ENCODE measurements at regions of chr12 and their contacts with region 1.

Region 1: GRCh38 chr12:5003020-5003666 is 40.5 kb upstream of the KCNA5 start:
- DNase-seq: peak in 3 of 4 donors; percentile 12 to 48 (median 45)
- ATAC-seq: peak; percentile 95
- H3K4me3 ChIP-seq: no peak overlapping the region
- H3K27ac ChIP-seq: no peak overlapping the region
- H3K4me1 ChIP-seq: no peaks in the 10 kb centered on the region
- H3K27me3 ChIP-seq: peaks cover 0 to 30% of the 10 kb centered on the region in 2 donors
- CTCF ChIP-seq: peak; percentile 73 to 86

Region 2: DNA sequence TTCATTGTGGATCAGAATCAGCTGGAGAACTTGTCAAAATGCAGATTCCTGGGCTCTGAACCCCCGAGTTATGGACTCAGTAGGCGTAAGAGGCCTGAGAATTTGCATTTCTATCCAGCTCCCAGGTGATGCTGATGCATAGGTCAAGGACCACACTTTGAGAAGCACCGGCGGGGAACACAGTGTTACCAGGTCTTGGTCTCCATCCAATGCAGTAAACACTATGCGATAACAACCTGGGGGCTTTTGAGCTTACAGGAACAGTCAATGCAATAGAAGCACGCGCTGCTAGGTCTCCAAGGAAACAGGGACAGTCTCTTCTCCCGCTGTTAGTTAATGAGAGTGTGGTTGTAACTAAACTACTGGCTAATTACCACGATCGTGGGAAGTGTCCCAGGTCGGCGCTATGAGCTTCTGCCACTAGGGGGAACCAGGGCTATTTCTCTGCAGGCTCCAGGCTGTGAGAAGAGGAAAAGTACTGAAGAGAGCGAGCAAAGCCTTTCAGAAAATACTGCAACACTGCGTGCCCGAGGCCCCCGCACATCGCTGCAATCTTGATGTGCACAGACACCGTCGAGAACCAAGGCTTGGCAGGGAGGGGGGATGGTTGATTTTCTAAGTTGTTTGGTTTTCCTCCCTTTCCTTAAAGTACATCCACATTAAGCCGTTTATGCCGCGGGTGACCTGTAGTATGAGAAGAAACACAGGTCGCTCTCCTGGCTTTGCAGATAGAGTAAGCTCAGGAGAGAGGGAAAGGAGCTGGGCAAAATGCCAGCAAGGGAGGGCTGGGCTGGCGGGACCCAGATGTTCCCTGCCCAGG is 145.5 kb before region 1 on chr12:
- intact Hi-C with region 1: loop called in 1 of 2 experiments (anchors 5 kb)
- DNase-seq: peak in 3 of 4 donors; percentile 47 to 67 (median 55)
- ATAC-seq: peak; percentile 94
- H3K4me3 ChIP-seq: no peak overlapping the region
- H3K27ac ChIP-seq: no peak overlapping the region
- H3K4me1 ChIP-seq: peaks cover 6 to 8% of the 10 kb centered on the region in 2 donors
- H3K27me3 ChIP-seq: peaks cover 0 to 65% of the 10 kb centered on the region in 2 donors
- CTCF ChIP-seq: peak; percentile 86 to 96

Region 3: GRCh38 chr12:4899364-4899763 is 103.8 kb before region 1 on chr12:
- intact Hi-C with region 1: no loop called
- DNase-seq: no peak
- ATAC-seq: no peak
- H3K4me3 ChIP-seq: no peak overlapping the region
- H3K27ac ChIP-seq: no peak overlapping the region
- H3K4me1 ChIP-seq: no peaks in the 10 kb centered on the region
- H3K27me3 ChIP-seq: peaks cover 0 to 42% of the 10 kb centered on the region in 2 donors
- CTCF ChIP-seq: no peak

Region 4: DNA sequence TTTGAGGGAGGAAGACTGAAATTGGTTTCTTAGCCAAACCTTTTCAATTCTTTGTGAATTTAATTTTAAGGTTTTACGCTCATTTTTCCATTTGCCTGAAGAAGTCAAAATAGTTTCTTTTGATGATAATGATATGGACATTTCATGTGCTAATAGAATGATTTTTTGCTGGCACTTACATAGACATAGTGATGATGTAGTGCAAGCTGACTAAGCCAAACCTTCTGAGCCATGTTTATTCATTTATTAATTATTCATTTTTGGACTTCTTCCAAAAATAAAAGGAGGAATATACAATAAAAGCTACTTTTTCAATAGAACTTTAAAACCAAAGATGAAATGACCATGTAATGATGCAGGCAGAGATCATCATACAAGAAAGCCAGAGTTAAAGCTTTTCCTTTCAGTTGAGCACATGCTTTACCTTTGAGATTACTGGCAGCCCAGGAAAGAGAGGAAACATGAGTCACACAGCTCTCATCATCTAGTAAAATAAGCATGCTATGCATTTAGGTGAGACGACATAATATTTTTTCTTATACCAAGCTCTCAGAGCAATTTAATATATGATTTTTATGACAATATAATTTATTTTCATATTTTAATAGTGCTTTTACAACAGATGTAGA is 68.6 kb before region 1 on chr12:
- intact Hi-C with region 1: no loop called
- DNase-seq: no peak
- ATAC-seq: no peak
- H3K4me3 ChIP-seq: no peak overlapping the region
- H3K27ac ChIP-seq: no peak overlapping the region
- H3K4me1 ChIP-seq: no peaks in the 10 kb centered on the region
- H3K27me3 ChIP-seq: peaks cover 0 to 55% of the 10 kb centered on the region in 2 donors
- CTCF ChIP-seq: no peak

Region 5: DNA sequence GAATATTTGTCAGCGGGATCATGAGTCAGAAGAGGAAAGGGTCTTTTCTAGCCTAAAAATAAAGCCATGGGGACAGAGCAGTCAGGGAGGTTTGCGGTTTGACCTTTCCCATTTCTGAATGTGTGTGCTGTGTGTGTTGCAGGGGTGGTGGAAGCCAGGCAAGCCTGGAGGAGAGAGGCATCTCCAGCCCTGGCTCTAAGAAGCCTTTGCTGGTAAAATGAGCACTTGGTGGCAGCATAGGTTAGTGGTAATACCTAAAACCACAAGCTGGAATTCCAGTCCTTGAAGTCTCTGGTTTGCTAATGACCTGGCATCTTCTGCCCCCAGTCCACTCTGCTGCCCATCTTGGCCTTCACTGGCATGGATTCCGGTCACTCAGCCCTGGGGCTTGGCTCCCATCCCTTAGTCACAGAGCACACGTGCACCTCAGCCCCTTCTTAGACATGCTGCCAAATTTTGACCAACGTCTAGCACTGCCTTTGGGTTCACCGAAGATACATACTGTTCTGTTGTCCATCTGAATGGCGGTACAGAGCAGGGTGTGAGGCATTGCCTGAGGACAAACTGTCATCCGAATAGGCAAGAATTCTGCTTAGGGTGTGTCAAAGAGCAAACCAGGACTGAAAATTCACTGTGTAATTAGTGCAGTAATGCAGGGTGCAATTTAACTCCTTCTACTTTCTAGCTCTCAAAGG is 93.2 kb after region 1 on chr12:
- intact Hi-C with region 1: no loop called
- DNase-seq: no peak
- ATAC-seq: no peak
- H3K4me3 ChIP-seq: no peak overlapping the region
- H3K27ac ChIP-seq: no peak overlapping the region
- H3K4me1 ChIP-seq: no peaks in the 10 kb centered on the region
- H3K27me3 ChIP-seq: peaks cover 0 to 27% of the 10 kb centered on the region in 2 donors
- CTCF ChIP-seq: no peak